Left colon (tissue), 2 donors: ENCODE measurements at regions of chr11 and their contacts with region 1.

Region 1: DNA sequence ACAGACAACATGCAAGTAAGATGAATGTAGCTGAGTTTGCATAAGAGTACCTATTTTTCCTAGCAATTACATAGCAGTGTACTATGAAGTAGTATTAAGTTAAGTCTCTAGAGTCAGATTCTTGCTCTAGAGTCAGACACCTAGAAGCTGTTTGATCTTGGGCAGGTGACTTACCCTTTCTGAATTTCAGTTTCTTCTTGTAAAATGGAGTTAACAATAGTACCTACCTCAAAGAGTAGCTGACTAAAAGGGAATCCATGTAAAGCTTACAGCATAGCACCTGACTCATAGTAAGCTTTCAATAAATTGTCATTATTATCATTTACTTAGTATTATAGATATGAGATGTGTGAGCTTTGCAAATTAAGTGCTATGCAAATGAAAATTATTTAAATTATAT is 47.8 kb upstream of the PTPRJ start:
- DNase-seq: no peak
- ATAC-seq: no peak

Region 2: DNA sequence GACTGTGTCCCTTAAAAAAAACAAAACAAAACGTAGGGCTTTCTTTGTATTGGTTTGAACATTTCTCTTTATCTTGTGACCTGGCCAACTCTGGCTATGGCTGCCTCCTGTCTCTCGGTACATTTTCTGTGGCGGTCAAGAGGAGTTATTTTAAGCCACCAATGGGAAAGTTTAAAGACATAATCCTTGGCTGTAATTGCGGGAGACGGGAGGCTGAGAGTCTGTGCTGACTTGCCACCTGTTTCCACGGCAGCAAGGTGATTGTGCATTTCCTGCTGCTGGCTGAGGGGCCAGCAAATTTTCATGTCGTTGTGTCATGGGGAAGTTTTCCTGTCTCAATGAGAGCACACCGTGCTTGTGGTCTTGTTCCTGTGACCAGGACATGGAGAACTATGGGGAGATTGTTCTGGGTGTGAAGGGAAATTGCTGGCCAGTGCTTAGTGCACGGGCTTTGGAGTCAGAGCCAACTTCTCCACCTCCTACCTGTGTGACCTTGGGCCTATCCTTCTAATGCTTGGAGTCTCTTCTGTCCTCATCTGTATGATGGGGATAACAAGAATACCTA is 58.8 kb after region 1 on chr11:
- intact Hi-C with region 1: no loop called
- DNase-seq: peak; percentile 52 to 62
- ATAC-seq: peak; percentile 50

Region 3: DNA sequence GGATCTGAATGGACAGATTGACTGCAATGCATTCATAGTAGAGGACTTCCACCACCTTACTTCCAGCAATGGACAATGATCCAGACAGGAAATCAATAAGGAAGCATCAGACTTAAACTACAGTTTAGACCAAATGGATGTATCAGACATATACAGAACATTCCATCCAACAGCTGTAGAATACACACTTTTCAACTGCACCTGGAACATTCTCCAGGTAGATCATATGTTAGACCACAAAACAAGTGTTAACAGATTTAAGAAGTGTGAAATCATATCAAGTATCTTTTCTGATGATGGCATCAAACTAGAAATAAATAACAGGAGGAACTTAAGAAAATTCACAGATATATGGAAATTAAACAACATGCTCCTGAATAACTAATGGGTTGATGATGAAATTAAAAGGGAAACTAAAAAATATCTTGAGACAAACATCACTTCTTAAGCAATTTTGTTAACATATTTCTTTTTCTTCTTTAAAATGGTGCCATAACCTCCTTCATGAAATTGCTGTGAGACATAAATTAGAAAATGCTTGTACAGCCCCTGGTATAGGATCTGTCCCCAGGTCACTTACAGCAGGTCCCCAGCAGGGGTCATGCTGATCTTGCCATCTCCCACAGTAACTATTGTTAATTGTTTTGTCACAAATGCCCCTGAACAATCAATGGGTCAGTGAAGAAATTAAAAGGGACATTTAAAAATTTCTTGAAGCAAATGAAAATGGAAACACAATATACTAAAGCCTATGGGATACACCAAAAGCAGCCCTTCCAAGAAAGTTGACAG is 184.1 kb after region 1 on chr11:
- intact Hi-C with region 1: loop called (anchors 2 to 10 kb)
- DNase-seq: no peak
- ATAC-seq: peak; percentile 54